Naive thymus-derived CD4-positive, alpha-beta T cell (primary cell): ENCODE measurements at regions of chr22 and their contacts with region 1.

Region 1: DNA sequence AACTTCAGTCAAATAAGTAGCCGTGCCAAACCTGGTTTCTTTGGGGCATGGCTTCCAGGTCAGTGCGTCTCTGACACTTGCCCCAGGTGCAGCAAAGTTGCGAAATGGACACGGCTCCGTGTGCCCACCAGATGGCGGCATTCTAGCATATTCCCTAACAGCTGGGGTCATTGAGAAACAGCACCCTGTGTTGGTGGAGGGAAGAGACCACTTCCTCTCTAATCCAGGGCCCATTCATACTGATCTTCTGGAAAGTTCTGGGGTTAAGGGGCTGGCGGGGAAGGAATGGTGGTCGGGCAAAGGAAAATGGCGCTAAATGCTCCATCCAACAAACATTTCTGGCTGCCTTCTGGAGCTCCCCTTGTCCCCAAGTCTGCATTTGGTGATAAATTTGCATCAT is 141.2 kb upstream of the TIMP3 start:
- DNase-seq: peak; percentile 16 to 62 (median 46)
- ATAC-seq: peak; percentile 54
- H3K4me3 ChIP-seq: no peak overlapping the region
- H3K4me3 Mint-ChIP-seq: no peak overlapping the region
- H3K27ac ChIP-seq: no peak overlapping the region
- H3K27ac Mint-ChIP-seq: no peak overlapping the region
- H3K4me1 ChIP-seq: no peaks in the 10 kb centered on the region
- H3K4me1 Mint-ChIP-seq: peaks cover 0 to 5% (median 0%) of the 10 kb centered on the region in 7 donors
- H3K27me3 ChIP-seq: no peaks in the 10 kb centered on the region
- H3K27me3 Mint-ChIP-seq: peaks cover 0 to 15% (median 6%) of the 10 kb centered on the region in 5 donors

Region 2: GRCh38 chr22:32548039-32548438 is 112.3 kb before region 1 on chr22:
- CTCF ChIA-PET with region 1: no interaction called
- POLR2A ChIA-PET with region 1: no interaction called
- intact Hi-C with region 1: no loop called
- DNase-seq: no peak
- ATAC-seq: no peak
- H3K4me3 ChIP-seq: no peak overlapping the region
- H3K4me3 Mint-ChIP-seq: no peak overlapping the region
- H3K27ac ChIP-seq: no peak overlapping the region
- H3K27ac Mint-ChIP-seq: no peak overlapping the region
- H3K4me1 ChIP-seq: no peaks in the 10 kb centered on the region
- H3K4me1 Mint-ChIP-seq: peaks cover 0 to 3% (median 0%) of the 10 kb centered on the region in 7 donors
- H3K27me3 ChIP-seq: no peaks in the 10 kb centered on the region
- H3K27me3 Mint-ChIP-seq: peaks cover 0 to 30% (median 17%) of the 10 kb centered on the region in 5 donors

Region 3: DNA sequence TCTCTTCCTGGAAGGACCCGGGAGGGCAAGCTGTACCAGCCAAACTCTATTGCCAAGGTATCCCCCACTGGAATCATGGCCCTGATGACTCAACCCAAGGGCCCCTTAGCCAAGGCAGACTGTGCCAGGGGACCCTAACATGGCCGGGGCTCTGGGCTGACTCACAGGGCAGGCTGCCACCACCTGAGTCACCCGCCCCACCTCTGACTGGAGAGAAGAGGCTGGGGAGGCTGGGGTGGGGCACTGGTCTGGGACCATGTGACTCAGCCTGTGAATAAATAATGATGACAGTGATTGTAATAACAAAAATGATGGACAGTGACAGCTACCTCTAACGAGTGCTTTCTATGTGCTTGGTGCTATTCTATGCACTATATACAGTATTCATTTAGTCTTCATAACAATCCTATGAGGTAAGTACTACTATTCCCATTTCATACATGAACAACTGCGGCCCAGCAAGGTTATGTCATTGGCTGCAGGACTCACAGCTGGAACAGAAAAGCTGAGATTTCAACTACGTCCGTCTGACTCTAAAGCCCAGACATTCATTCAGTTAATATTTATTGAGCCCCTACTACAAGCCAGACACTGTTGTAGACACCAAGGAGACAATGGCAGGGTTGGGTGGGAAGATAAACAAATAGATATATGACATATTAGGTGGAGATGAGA is 101.5 kb before region 1 on chr22:
- CTCF ChIA-PET with region 1: no interaction called
- POLR2A ChIA-PET with region 1: no interaction called
- intact Hi-C with region 1: no loop called
- DNase-seq: no peak
- ATAC-seq: no peak
- H3K4me3 ChIP-seq: no peak overlapping the region
- H3K4me3 Mint-ChIP-seq: no peak overlapping the region
- H3K27ac ChIP-seq: no peak overlapping the region
- H3K27ac Mint-ChIP-seq: no peak overlapping the region
- H3K4me1 ChIP-seq: no peaks in the 10 kb centered on the region
- H3K4me1 Mint-ChIP-seq: no peaks in the 10 kb centered on the region
- H3K27me3 ChIP-seq: no peaks in the 10 kb centered on the region
- H3K27me3 Mint-ChIP-seq: peaks cover 0 to 10% (median 0%) of the 10 kb centered on the region in 5 donors

Region 4: DNA sequence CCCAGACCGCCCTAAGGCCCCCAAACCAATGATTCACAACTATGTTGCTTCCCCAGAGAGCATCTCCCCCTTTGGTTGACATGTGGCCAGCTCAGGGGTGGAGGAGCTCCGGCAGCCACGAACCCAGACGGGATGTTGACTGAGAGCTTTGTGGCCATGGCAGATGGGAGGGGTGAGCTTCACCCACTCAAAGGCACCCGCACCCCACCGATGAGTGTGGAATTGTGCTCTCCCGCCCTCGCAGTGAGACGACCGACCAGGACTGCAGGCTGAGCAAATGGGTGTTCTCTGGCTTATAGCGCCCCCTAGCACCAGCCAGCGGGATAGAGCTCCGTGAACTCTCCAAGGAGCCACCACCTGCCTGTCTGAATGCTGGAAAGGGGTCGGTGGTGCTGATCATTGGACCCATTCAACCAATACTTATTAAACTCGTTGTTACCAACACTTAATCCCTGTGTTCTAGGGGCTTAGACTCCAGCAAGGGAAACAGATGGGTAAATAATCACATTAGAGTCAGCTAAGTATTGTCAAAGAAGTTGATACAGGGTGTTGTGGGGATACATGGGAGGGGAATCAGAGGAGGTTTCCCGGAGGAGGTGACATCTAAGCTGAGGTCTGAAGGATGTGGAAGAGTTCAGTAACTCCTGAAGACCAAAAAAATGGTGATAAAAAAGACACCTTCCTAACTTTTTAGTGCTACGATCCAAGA is 136.7 kb after region 1 on chr22:
- CTCF ChIA-PET with region 1: interaction called, 59 read pairs
- POLR2A ChIA-PET with region 1: no interaction called
- intact Hi-C with region 1: loop called in 1 of 2 experiments (anchors 1 kb)
- DNase-seq: peak; percentile 32 to 63 (median 50)
- ATAC-seq: peak; percentile 81
- H3K4me3 ChIP-seq: no peak overlapping the region
- H3K4me3 Mint-ChIP-seq: peak overlapping the region in 2 of 10 donors; percentile 2 to 17
- H3K27ac ChIP-seq: no peak overlapping the region
- H3K27ac Mint-ChIP-seq: no peak overlapping the region
- H3K4me1 ChIP-seq: no peaks in the 10 kb centered on the region
- H3K4me1 Mint-ChIP-seq: peaks cover 0 to 6% (median 5%) of the 10 kb centered on the region in 7 donors
- H3K27me3 ChIP-seq: no peaks in the 10 kb centered on the region
- H3K27me3 Mint-ChIP-seq: peaks cover 33 to 57% (median 41%) of the 10 kb centered on the region in 5 donors

Region 5: GRCh38 chr22:33202455-33202854 is 542.2 kb after region 1 on chr22:
- CTCF ChIA-PET with region 1: no interaction called
- POLR2A ChIA-PET with region 1: no interaction called
- intact Hi-C with region 1: no loop called
- DNase-seq: no peak
- ATAC-seq: no peak
- H3K4me3 ChIP-seq: no peak overlapping the region
- H3K4me3 Mint-ChIP-seq: no peak overlapping the region
- H3K27ac ChIP-seq: no peak overlapping the region
- H3K27ac Mint-ChIP-seq: no peak overlapping the region
- H3K4me1 ChIP-seq: no peaks in the 10 kb centered on the region
- H3K4me1 Mint-ChIP-seq: no peaks in the 10 kb centered on the region
- H3K27me3 ChIP-seq: no peaks in the 10 kb centered on the region
- H3K27me3 Mint-ChIP-seq: peaks cover 9 to 39% (median 16%) of the 10 kb centered on the region in 5 donors